HAP-1 (cell line): ENCODE measurements at regions of chr11 and their contacts with region 1.

Region 1: GRCh38 chr11:63838678-63839507 is at the start of gene MARK2:
- DNase-seq: peak; percentile 95 to 99
- H3K4me3 ChIP-seq: peak within 1 kb of the TSS; percentile 83
- H3K4me1 ChIP-seq: peaks cover 6% of the 10 kb centered on the region; the same call in 1 of the 2 replicates
- H3K27me3 ChIP-seq: no peaks in the 10 kb centered on the region

Region 2: GRCh38 chr11:63945477-63946163 is 106.7 kb after region 1 on chr11:
- in situ Hi-C with region 1: loop called (anchors 5 kb)
- DNase-seq: peak; percentile 50 to 76
- H3K4me3 ChIP-seq: no peak overlapping the region
- H3K4me1 ChIP-seq: no peaks in the 10 kb centered on the region
- H3K27me3 ChIP-seq: no peaks in the 10 kb centered on the region

Region 3: DNA sequence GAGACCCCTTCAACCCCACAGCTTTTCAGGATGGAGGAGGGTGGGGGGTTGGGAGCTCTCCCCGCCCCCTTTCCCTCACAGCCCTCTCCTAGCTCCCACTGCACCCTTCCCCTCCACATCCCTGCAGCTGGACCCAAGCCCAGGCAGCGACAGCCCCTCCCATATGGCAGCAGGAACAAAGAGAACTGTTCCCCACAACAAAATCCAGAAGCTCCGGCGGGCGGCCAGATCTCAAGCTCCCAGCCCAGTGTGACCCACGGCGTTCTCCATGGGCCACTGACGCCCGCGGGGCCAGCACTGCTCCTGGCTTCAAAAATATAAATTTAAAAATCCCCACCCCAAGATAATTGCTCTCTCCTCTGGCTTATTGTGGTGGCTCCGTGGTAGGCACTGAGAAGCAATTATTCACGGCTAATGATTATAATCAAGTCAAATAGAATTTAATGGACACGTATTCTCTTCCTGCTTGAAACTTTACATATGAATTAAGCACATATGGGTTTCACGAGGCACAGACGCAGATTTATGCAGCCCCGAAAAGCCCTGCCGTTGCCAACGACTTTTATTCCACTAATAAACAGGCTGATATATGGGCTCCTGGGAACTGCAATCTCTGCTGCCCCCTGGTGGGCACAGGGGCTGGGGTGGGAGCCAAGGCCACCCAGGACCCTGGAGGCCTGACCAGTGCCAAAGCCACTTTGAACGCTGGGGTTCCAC is 309.5 kb after region 1 on chr11:
- in situ Hi-C with region 1: loop called (anchors 5 kb)
- DNase-seq: peak; percentile 83 to 91
- H3K4me3 ChIP-seq: no peak overlapping the region
- H3K4me1 ChIP-seq: peaks cover 8% of the 10 kb centered on the region; the same call in 1 of the 2 replicates
- H3K27me3 ChIP-seq: no peaks in the 10 kb centered on the region